Activated CD8-positive, alpha-beta T cell treated with anti-CD3 and anti-CD28 coated beads for 36 hours (primary cell): ENCODE measurements at regions of chr9 and their contacts with region 1.

Region 1: DNA sequence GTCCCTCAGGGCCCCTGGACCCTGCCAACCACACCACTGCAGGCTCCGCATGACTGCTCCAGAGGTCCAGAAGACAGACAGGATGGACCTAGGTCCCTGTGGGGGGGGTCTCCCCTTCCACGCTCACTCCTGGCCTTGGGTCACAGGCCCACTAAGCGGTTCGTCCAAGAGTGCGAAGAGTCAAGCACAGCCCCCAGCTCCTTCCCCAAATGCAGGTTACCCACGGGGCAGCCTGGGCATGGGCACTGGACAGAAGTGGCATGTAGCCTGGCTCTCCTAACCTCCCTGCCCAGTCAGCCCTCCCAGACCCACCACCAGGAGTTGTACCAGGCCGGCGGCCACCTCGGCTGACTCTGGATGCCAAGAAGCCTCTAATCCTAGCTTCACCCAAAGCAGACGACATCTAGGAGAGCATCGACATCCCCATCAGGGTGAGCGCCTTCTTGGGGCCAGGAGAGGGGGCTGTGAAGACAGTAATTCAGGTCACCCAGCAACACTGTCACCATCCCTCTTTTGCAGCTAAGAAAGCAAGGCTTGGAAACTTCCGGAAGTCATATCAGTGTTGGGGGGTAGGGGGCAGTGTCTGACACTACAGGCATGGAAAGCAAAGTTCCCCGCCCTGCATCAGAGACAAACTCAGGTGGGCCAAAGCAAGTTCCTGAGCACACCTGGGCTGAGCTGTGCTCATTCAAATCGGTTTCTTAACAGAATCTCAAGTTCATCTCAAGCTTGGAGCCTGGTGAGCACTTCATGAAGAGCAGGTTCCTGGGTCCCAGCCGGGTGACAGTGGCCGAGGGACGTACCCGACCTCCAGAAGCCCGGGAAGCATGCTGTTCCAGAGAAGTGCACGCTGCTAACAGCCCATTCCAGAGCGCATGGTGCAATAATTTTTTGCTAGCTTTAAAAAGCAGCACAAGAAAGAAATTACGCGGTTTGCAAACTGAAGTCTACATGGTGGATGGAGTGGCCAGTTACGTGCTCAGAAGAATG is 68.7 kb downstream of the SEMA4D start:
- DNase-seq: peak; percentile 83
- ATAC-seq: peak; percentile 35
- H3K4me3 Mint-ChIP-seq: peak overlapping the region; percentile 26
- H3K27ac Mint-ChIP-seq: peak overlapping the region; percentile 98
- H3K4me1 Mint-ChIP-seq: peaks cover 91% of the 10 kb centered on the region
- H3K27me3 Mint-ChIP-seq: no peaks in the 10 kb centered on the region
- CTCF ChIP-seq: peak; percentile 71

Region 2: GRCh38 chr9:89375191-89375760 is 53.9 kb before region 1 on chr9:
- CTCF ChIA-PET with region 1: no interaction called
- POLR2A ChIA-PET with region 1: no interaction called
- intact Hi-C with region 1: no loop called
- DNase-seq: peak; percentile 64
- ATAC-seq: peak; percentile 43
- H3K4me3 Mint-ChIP-seq: no peak overlapping the region
- H3K27ac Mint-ChIP-seq: peak overlapping the region; percentile 87
- H3K4me1 Mint-ChIP-seq: peaks cover 46% of the 10 kb centered on the region
- H3K27me3 Mint-ChIP-seq: no peaks in the 10 kb centered on the region
- CTCF ChIP-seq: no peak

Region 3: GRCh38 chr9:89418882-89419640 is 10.1 kb before region 1 on chr9:
- CTCF ChIA-PET with region 1: interaction called, 13 read pairs
- POLR2A ChIA-PET with region 1: interaction called, 18 read pairs
- intact Hi-C with region 1: no loop called
- DNase-seq: peak; percentile 92
- ATAC-seq: peak; percentile 52
- H3K4me3 Mint-ChIP-seq: peak overlapping the region; percentile 79
- H3K27ac Mint-ChIP-seq: peak overlapping the region; percentile 98
- H3K4me1 Mint-ChIP-seq: peaks cover 97% of the 10 kb centered on the region
- H3K27me3 Mint-ChIP-seq: no peaks in the 10 kb centered on the region
- CTCF ChIP-seq: no peak

Region 4: DNA sequence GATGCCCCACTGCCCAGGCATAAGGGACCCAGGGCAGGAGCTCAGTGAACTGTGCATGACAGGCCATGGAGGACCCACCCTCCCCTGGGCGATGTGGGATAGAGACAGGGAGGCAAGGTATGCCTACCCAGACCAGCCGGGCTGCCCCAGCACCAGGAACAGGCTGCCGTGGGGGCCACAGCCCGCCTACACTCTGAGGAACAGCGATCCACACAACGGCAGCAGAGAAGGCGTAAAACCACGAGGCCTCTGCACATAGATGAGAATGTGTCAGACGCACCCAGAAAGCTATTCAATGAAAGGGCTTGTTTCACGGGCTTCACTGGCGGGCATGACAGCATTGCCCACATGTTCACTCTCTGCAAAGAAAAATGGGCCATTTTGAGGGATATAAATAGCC is 19.2 kb after region 1 on chr9:
- CTCF ChIA-PET with region 1: interaction called, 87 read pairs
- POLR2A ChIA-PET with region 1: interaction called, 39 read pairs
- intact Hi-C with region 1: no loop called
- DNase-seq: peak; percentile 82
- ATAC-seq: peak; percentile 77
- H3K4me3 Mint-ChIP-seq: peak overlapping the region; percentile 12
- H3K27ac Mint-ChIP-seq: peak overlapping the region; percentile 90
- H3K4me1 Mint-ChIP-seq: peaks cover 95% of the 10 kb centered on the region
- H3K27me3 Mint-ChIP-seq: no peaks in the 10 kb centered on the region
- CTCF ChIP-seq: no peak

Region 5: GRCh38 chr9:89466451-89467277 is 37.5 kb after region 1 on chr9:
- CTCF ChIA-PET with region 1: interaction called, 16 read pairs
- POLR2A ChIA-PET with region 1: interaction called, 9 read pairs
- intact Hi-C with region 1: loop called (anchors 5 kb)
- DNase-seq: peak; percentile 84
- ATAC-seq: peak; percentile 70
- H3K4me3 Mint-ChIP-seq: peak overlapping the region; percentile 68
- H3K27ac Mint-ChIP-seq: peak overlapping the region; percentile 95
- H3K4me1 Mint-ChIP-seq: peaks cover 92% of the 10 kb centered on the region
- H3K27me3 Mint-ChIP-seq: no peaks in the 10 kb centered on the region
- CTCF ChIP-seq: no peak

Region 6: GRCh38 chr9:89489548-89490530 is 60.6 kb after region 1 on chr9:
- CTCF ChIA-PET with region 1: interaction called, 14 read pairs
- POLR2A ChIA-PET with region 1: no interaction called
- intact Hi-C with region 1: no loop called
- DNase-seq: no peak
- ATAC-seq: peak; percentile 66
- H3K4me3 Mint-ChIP-seq: peak overlapping the region; percentile 61
- H3K27ac Mint-ChIP-seq: peak overlapping the region; percentile 89
- H3K4me1 Mint-ChIP-seq: peaks cover 95% of the 10 kb centered on the region
- H3K27me3 Mint-ChIP-seq: no peaks in the 10 kb centered on the region
- CTCF ChIP-seq: no peak

Region 7: DNA sequence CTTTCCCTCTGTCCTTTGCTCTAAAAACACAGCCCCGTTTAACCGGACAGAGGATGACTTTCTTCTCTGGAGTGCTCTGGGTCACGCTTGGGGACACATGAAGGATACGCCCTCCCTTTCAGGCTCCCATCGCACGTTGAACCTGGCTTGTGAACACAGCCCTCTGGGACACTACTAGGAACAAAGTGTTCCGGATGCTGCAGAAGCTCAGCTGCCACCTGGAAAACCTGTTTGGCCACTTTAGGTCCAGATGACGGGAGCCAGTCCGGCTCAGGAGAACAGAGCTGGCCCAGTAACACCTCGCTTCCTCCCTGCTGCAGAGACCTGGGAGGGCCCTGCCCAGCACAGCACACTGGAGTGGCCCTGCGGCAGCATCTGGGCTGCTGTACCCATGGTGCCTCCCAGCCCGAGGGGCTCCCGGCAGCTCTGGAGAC is 235.7 kb after region 1 on chr9:
- CTCF ChIA-PET with region 1: no interaction called
- POLR2A ChIA-PET with region 1: no interaction called
- intact Hi-C with region 1: no loop called
- DNase-seq: no peak
- ATAC-seq: no peak
- H3K4me3 Mint-ChIP-seq: no peak overlapping the region
- H3K27ac Mint-ChIP-seq: no peak overlapping the region
- H3K4me1 Mint-ChIP-seq: no peaks in the 10 kb centered on the region
- H3K27me3 Mint-ChIP-seq: peaks cover 2% of the 10 kb centered on the region
- CTCF ChIP-seq: no peak